Activated CD8-positive, alpha-beta T cell treated with anti-CD3 and anti-CD28 coated beads, Interleukin-2, amount 10 ng/mL, durations not matched to agents 7 days and 5 days (primary cell): ENCODE measurements at regions of chr14 and their contacts with region 1.

Region 1: DNA sequence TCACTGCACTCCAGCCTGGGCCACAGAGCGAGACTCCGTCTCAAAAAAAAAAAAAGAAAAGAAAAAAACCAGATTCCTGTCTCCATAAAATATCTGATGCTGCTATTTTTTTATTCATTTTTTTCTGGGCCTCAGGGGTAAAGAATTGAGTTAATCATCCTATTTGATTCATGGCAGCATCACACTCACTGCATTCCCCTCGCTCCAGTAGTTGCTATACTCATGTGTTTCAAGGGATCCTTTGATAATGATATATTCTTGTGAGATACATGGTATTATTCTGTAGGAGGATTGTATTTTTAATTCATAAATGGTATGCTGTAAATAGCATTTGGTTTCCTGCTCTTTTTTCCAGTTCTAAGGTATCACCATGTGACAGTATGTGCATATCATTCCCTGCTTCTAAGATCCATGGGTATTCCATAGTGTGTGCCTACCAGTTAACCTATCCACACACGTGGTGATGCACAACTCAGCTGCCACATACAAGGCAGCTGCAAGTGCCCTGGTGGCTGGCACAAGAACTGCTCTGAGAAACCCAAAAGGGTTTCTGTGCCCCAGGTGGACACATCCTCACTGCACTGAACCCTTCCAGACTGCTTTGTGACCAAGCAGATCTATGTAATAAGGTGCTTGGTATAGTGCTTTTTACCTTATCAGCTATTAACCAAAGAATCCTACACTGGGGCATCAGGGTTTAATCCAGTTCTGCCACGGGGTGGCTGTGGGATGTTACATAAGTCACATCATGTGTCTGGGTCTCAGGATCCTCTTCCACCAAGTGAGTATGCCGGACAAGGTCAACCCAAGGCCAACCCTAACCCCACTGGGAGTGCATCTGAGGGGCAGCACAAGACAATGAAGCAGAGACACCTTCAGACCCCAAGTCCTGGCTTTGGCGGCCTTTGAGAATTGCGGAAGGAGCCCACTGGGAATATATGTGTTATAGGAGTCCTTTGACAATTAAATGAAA is 74.6 kb downstream of the ZFP36L1 start:
- DNase-seq: no peak
- ATAC-seq: no peak
- H3K4me3 Mint-ChIP-seq: no peak overlapping the region
- H3K27ac Mint-ChIP-seq: no peak overlapping the region
- H3K4me1 Mint-ChIP-seq: peaks cover 32% of the 10 kb centered on the region
- H3K27me3 Mint-ChIP-seq: peaks cover 8% of the 10 kb centered on the region

Region 2: DNA sequence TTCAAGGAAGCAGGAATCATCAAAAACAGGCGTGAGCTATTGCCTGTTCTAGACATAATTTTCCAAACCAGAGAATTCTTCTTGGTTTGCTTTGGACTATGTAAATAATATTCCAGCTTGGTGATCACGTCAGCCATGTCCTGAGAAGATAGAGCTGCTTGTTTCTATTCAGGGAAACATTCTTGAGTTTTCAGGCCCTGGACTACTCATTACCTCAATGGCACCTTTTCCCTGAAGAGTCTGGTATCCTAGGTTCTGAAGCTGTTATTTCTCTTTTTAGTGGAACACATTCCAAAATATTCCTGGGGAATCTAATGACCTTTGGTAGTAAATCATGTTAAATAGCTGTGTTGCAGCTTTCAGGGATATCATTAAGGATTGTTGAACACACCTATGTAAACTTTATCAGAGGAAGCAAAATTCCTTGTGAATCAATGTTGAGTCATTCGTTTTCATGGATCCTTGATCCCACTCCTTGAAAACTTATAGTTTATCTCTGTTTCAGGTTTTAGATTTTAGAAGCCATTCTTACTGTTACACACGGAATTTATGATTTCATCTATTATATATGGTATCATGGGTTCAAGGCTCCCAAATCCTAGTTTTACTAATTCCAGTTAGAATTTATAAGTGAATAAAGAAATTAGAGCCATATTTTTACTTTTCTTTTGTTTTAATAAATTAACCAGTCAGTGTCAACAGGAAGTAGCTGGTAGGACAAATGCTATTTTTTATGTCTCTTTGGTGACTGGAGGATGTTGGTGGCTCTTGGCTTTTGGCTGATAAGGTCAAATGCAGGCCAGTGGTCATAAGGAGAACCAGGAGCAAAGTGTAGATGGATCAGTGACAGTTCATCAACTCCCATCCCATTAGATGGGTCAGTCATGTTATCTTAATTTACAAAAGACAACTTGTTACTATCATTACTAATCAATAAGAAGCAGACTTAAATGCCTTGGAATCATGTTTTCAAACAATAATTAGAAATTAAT is 305.5 kb before region 1 on chr14:
- CTCF ChIA-PET with region 1: no interaction called
- POLR2A ChIA-PET with region 1: no interaction called
- DNase-seq: no peak
- ATAC-seq: no peak
- H3K4me3 Mint-ChIP-seq: no peak overlapping the region
- H3K27ac Mint-ChIP-seq: no peak overlapping the region
- H3K4me1 Mint-ChIP-seq: peaks cover 14% of the 10 kb centered on the region
- H3K27me3 Mint-ChIP-seq: no peaks in the 10 kb centered on the region

Region 3: DNA sequence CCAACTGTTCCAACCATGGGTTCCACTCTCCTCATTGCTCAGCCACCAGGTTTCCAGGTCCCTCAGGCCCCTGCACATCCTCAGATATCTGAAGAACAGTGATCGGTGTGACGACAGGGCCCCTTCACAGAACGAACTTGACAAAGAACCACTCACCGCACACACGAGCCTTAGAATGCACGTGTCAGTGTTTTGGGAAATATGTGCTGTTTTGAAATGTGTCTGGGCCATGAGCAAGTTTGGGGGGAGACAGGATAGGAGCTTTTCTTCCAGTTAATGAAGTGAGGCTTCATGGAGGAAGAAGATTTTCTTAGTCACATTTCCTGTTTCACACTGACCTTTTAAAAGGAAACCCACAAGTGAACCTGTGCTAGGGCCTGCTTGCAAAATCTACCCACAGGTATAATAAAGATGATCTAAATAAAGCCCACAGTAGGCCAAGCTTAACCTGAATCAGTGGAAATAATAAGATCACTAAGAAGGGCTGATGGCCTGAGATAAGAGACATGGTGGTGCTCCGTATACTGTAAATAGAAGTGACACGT is 16.0 kb after region 1 on chr14:
- CTCF ChIA-PET with region 1: interaction called, 10 read pairs
- POLR2A ChIA-PET with region 1: no interaction called
- DNase-seq: peak; percentile 57
- ATAC-seq: peak; percentile 82
- H3K4me3 Mint-ChIP-seq: peak overlapping the region; percentile 16
- H3K27ac Mint-ChIP-seq: peak overlapping the region; percentile 70
- H3K4me1 Mint-ChIP-seq: peaks cover 38% of the 10 kb centered on the region
- H3K27me3 Mint-ChIP-seq: no peaks in the 10 kb centered on the region